CD4-positive, alpha-beta memory T cell (primary cell): ENCODE measurements at regions of chr1 and their contacts with region 1.

Region 1: DNA sequence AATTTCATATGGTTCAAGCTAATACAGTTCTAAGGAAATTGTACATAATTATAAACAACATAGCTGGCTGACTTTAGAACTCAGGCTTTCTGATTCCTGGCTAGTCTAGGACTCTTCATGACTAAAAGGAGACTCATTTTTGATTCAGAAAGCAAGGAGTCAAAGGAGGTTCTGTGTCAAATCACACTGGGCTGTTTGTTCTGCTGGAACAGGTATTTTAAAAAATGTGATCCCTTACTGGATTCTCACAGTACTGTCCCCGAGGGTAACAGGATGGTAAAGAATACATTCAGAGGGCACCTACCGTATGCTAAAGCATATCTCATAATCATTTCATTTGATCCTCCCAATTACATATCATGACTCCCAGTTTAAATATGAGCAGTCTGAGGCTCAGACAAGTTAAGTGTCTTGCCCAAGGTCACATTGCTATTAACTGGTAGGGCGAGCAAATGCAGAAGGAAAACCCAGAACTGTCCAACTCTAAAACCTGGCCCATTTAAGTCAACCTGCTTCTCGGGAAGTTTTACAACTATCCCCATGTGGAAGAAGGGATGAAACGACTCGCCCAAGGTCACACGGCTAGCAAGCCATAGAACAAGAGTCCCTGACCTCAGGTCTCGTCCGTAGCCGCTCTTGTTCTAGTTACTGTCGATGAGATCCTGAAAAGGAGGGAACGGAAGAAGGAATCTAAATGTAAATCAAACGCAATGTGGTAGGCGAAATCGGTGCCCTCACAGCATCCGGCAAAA is 675 bp downstream of the MYSM1 start:
- DNase-seq: no peak
- H3K4me3 ChIP-seq: peak overlapping the region; percentile 85 to 89
- H3K4me3 Mint-ChIP-seq: peak overlapping the region; percentile 97 to 100 (median 98)
- H3K27ac ChIP-seq: peak overlapping the region; percentile 95
- H3K27ac Mint-ChIP-seq: peak overlapping the region; percentile 92 to 100 (median 99)
- H3K4me1 ChIP-seq: peaks cover 28% of the 10 kb centered on the region
- H3K4me1 Mint-ChIP-seq: peaks cover 15 to 28% (median 18%) of the 10 kb centered on the region in 4 donors
- H3K27me3 ChIP-seq: no peaks in the 10 kb centered on the region
- H3K27me3 Mint-ChIP-seq: no peaks in the 10 kb centered on the region

Region 2: GRCh38 chr1:58710190-58711085 is 11.3 kb after region 1 on chr1:
- CTCF ChIA-PET with region 1: interaction called, 10 read pairs
- POLR2A ChIA-PET with region 1: interaction called, 8 read pairs
- intact Hi-C with region 1: no loop called
- DNase-seq: no peak
- H3K4me3 ChIP-seq: no peak overlapping the region
- H3K4me3 Mint-ChIP-seq: no peak overlapping the region
- H3K27ac ChIP-seq: no peak overlapping the region
- H3K27ac Mint-ChIP-seq: no peak overlapping the region
- H3K4me1 ChIP-seq: no peaks in the 10 kb centered on the region
- H3K4me1 Mint-ChIP-seq: peaks cover 0 to 10% (median 1%) of the 10 kb centered on the region in 4 donors
- H3K27me3 ChIP-seq: no peaks in the 10 kb centered on the region
- H3K27me3 Mint-ChIP-seq: no peaks in the 10 kb centered on the region

Region 3: GRCh38 chr1:58718435-58718834 is 19.2 kb after region 1 on chr1:
- CTCF ChIA-PET with region 1: interaction called, 6 read pairs
- POLR2A ChIA-PET with region 1: interaction called, 10 read pairs
- intact Hi-C with region 1: no loop called
- DNase-seq: peak in 3 of 5 donors; percentile 14 to 20 (median 15)
- H3K4me3 ChIP-seq: peak overlapping the region in 1 of 2 donors; percentile 2
- H3K4me3 Mint-ChIP-seq: peak overlapping the region; percentile 48 to 82 (median 69)
- H3K27ac ChIP-seq: peak overlapping the region; percentile 32
- H3K27ac Mint-ChIP-seq: peak overlapping the region; percentile 20 to 88 (median 62)
- H3K4me1 ChIP-seq: peaks cover 28% of the 10 kb centered on the region
- H3K4me1 Mint-ChIP-seq: peaks cover 20 to 37% (median 24%) of the 10 kb centered on the region in 4 donors
- H3K27me3 ChIP-seq: no peaks in the 10 kb centered on the region
- H3K27me3 Mint-ChIP-seq: no peaks in the 10 kb centered on the region

Region 4: GRCh38 chr1:58883037-58883887 is 184.1 kb after region 1 on chr1:
- CTCF ChIA-PET with region 1: no interaction called
- POLR2A ChIA-PET with region 1: no interaction called
- intact Hi-C with region 1: no loop called
- DNase-seq: no peak
- H3K4me3 ChIP-seq: no peak overlapping the region
- H3K4me3 Mint-ChIP-seq: no peak overlapping the region
- H3K27ac ChIP-seq: no peak overlapping the region
- H3K27ac Mint-ChIP-seq: no peak overlapping the region
- H3K4me1 ChIP-seq: peaks cover 23% of the 10 kb centered on the region
- H3K4me1 Mint-ChIP-seq: peaks cover 15 to 29% (median 23%) of the 10 kb centered on the region in 4 donors
- H3K27me3 ChIP-seq: no peaks in the 10 kb centered on the region
- H3K27me3 Mint-ChIP-seq: peaks cover 0 to 2% of the 10 kb centered on the region in 2 donors

Region 5: DNA sequence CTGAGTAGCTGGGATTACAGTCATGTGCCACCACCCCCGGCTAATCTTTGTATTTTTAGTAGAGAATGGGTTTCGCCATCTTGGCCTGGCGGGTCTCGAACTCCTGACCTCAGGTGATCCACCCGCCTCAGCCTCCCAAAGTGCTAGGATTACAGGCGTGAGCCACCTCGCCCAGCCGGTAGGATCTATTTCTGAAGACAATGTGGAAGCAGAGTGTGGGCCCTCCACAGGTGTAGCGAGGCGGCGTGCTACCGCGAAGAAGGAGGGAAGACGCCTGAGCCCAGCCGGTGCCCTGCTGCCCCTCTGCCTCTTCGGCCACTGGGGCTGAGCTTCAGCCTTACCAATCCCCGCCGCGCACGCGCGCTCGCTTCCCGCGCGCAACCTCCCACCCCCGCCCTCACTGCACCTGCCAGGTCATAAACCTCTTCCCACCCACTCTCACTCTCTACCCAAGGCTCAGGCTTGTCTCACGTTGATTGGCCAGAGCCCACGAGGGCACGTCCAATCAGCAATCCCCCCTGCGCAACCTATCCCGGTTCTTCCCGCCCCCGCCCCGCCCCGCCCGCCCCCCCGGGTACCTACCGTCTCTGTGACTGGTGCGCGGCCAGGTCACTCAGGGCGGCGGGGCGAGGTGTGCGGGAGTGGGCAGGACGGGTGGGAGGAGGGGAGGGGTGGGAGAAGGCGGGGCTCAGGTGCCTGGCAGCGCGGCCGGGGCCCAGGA is 1115.2 kb after region 1 on chr1:
- CTCF ChIA-PET with region 1: no interaction called
- POLR2A ChIA-PET with region 1: no interaction called
- intact Hi-C with region 1: loop called (anchors 2 kb)
- DNase-seq: peak; percentile 86 to 94 (median 92)
- H3K4me3 ChIP-seq: peak overlapping the region in 1 of 2 donors; percentile 52
- H3K4me3 Mint-ChIP-seq: peak overlapping the region in 5 of 8 donors; percentile 82 to 93 (median 88)
- H3K27ac ChIP-seq: peak overlapping the region; percentile 70
- H3K27ac Mint-ChIP-seq: peak overlapping the region in 6 of 7 donors; percentile 79 to 96 (median 91)
- H3K4me1 ChIP-seq: peaks cover 20% of the 10 kb centered on the region
- H3K4me1 Mint-ChIP-seq: peaks cover 3 to 6% (median 5%) of the 10 kb centered on the region in 4 donors
- H3K27me3 ChIP-seq: no peaks in the 10 kb centered on the region
- H3K27me3 Mint-ChIP-seq: peaks cover 10 to 14% of the 10 kb centered on the region in 2 donors